ENCODE measurements at regions of chr5 and their contacts with region 1.

Region 1: DNA sequence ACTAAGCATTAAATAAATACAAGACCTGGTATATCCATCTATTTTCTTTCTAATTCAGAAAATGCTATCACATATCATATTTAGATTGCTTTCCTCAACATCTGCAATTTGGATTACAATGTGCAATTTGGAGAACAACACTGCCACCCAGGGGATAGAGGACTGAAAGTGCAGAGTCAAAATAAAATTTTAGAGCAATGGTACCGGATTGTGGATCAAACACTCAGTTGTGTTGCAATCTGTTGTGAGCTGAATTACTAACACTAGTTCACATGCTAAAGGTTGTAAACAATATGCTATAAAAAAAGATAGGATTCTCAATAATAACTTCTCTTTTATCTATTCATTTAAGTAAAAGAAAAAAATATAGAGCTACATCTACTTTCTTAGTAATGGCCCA is 11.9 kb upstream of the SRFBP1 start:
- DNase-seq: peak; percentile 15
- H3K4me3 ChIP-seq: no peak overlapping the region
- H3K27ac ChIP-seq: no peak overlapping the region
- H3K27me3 ChIP-seq: no peaks in the 10 kb centered on the region
- CTCF ChIP-seq: peak; percentile 73

Region 2: DNA sequence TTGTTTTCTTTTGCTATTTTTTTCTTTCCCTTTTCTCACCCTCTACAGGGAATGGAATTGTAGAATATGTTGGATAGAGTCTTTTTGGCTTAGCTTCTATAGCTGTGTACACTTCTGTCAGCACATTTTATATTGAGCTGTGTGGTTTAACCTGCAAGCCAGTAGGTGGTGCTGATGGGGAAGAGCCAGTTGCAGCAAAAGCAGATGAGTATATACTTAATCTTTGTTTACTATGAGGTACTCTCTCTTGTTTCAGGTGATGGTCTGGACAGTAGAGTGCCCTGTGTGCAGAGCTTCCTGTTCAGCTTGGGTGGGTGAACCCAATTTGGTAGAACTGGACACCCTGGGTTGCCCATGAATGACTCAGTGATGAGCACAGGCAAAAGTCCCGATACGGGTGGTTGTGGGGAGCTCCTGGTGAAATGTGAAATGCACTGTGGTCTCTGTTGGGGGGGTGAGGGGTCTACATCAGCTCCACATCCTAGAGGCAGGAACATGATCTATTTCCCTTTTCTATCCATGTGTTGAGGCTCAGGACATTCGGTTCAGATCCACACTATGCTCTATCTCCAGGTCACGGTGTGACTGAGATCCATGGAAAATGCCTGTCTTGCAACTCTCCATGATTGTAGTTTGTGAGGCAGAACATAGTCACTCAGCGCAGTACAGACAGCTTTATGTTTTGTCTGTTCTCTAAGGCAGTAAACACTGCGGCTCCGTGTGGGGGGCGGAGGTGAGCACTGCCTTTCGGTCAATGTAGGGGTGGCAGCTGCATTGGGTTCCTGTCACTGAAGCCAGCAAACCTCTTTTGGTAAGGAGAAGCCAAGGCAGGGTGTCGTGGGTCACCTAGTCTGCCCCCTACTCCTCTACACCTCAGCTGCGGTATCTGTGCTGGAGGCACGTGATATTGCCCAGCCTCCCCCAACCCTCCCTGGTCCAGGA is 1132.6 kb before region 1 on chr5:
- CTCF ChIA-PET with region 1: interaction called, 31 read pairs
- POLR2A ChIA-PET with region 1: no interaction called
- DNase-seq: no peak
- H3K4me3 ChIP-seq: no peak overlapping the region
- H3K27ac ChIP-seq: no peak overlapping the region
- H3K27me3 ChIP-seq: no peaks in the 10 kb centered on the region
- CTCF ChIP-seq: peak; percentile 55

Region 3: GRCh38 chr5:121962347-121962670 is 12.4 kb after region 1 on chr5:
- CTCF ChIA-PET with region 1: interaction called, 44 read pairs
- POLR2A ChIA-PET with region 1: interaction called, 4 read pairs
- DNase-seq: no peak
- H3K4me3 ChIP-seq: peak overlapping the region; percentile 93
- H3K27ac ChIP-seq: peak overlapping the region; percentile 76
- H3K27me3 ChIP-seq: no peaks in the 10 kb centered on the region
- CTCF ChIP-seq: no peak

Measured in AG04450 (cell line).